ENCODE measurements at regions of chr22 and their contacts with region 1.

Region 1: DNA sequence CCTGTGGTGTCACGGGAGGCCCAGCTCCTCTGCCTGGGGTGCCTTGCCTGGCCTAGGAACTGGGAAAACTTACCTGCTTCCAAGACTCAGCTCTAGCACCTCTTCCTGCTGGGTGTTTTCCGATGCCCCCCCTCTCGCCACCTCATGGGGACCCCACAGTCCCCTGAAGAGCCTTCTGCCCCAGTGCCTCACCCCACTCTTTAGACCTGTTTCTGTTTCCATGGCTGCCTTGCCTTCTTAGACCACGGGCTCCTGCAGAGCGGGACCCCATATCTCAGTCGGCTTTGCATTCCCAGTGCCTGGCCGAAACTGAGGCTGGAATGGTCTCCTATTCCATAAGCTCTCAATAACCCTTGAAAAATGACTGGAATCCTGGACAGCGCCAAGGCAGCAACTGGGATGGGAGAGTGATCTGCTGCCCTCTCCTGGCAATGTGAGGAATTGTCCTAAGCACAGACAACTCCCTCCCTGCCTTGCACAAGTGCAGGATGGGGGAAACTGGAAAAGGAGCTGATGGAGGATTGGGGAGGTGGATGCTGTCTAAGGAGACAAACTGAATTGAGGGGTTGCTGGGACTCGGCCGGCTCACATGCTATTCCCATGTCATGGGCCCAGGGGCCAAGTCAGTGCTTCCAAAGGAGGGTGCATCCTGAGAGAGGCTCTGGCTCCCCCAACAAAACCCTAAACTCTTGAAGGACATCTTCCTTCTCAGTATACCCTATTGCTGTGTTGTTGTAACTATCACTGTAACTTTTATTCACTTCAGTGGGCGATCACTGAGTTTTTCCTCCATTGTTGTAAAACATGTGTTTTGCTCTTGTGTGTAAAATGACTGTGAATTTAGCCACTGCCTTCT is 26.6 kb upstream of the IL17RA start:
- DNase-seq: peak; percentile 67 to 87 (median 80)
- H3K4me3 ChIP-seq: no peak overlapping the region
- H3K27ac ChIP-seq: no peak overlapping the region
- H3K4me1 ChIP-seq: no peaks in the 10 kb centered on the region
- H3K27me3 ChIP-seq: no peaks in the 10 kb centered on the region
- CTCF ChIP-seq: peak; percentile 91 to 97 (median 92)
- POLR2A ChIP-seq: no peak

Region 2: DNA sequence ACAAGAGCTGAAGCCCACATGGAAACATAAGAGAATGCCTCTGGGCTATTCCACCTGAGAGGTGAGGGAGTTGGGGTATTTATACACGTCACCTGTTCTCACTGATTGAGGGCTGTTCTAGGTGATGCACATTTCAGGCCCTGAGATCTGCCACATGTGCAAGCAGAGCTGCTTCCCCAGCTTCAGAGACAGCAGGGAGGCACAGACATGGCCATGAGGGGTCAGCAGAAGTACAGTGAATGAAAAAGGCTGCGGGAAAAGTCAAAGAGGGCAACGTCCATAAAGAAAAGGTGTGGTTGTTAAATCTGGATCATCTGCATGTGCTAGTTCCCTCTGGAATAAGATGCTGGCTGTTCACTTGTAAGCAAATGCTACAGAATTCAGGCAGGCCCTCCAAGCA is 125.6 kb before region 1 on chr22:
- intact Hi-C with region 1: loop called (anchors 2 to 10 kb)
- DNase-seq: peak; percentile 22 to 55 (median 40)
- H3K4me3 ChIP-seq: no peak overlapping the region
- H3K27ac ChIP-seq: no peak overlapping the region
- H3K4me1 ChIP-seq: no peaks in the 10 kb centered on the region
- H3K27me3 ChIP-seq: peaks cover 6% of the 10 kb centered on the region
- CTCF ChIP-seq: peak in 5 of 6 experiments; percentile 23 to 50 (median 42)
- POLR2A ChIP-seq: no peak

Measured in adrenal gland (tissue), 19 donors.